K562 (cell line): ENCODE measurements at regions of chr2 and their contacts with region 1.

Region 1: GRCh38 chr2:112941753-112942658 is 31.0 kb downstream of the IL37 start:
- DNase-seq: peak; percentile 60 to 88 (median 68)
- ATAC-seq: peak; percentile 99
- H3K4me3 ChIP-seq: no peak overlapping the region
- H3K27ac ChIP-seq: no peak overlapping the region
- H3K4me1 ChIP-seq: peaks cover 0 to 3% of the 10 kb centered on the region in 2 experiments; a peak in 2 of 5 replicates
- H3K27me3 ChIP-seq: peaks cover 0 to 6% of the 10 kb centered on the region in 2 experiments; a peak in 1 of 5 replicates
- CTCF ChIP-seq: peak; percentile 87 to 94 (median 92)
- EP300 ChIP-seq: no peak
- POLR2A ChIP-seq: no peak
- RAD21 ChIP-seq: peak; percentile 82 to 91

Region 2: DNA sequence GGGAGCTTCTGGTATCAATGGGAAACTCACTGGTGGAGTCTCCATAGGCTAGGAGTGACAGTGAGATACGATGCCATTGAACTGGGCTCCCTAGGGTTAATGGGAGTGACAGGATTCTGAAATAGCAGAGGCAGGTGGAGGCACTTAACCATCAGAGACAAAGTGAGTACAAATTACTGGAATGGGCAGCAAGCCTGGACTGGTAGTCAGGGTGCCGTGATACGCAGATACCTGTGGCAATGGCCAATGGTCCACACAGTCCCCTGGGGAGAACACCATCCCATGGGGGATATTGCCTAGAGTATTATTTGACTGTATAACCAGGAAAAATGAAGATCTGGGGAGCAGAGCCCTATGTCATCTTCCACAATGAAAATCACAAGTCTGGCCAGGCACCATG is 340.3 kb before region 1 on chr2:
- CTCF ChIA-PET with region 1: interaction called, 4 read pairs
- POLR2A ChIA-PET with region 1: no interaction called
- in situ Hi-C with region 1: no loop called
- intact Hi-C with region 1: loop called (anchors 5 kb)
- DNase-seq: no peak
- ATAC-seq: no peak
- H3K4me3 ChIP-seq: no peak overlapping the region
- H3K27ac ChIP-seq: no peak overlapping the region
- H3K4me1 ChIP-seq: peaks cover 0 to 3% of the 10 kb centered on the region in 2 experiments; a peak in 2 of 5 replicates
- H3K27me3 ChIP-seq: no peaks in the 10 kb centered on the region
- CTCF ChIP-seq: no peak
- EP300 ChIP-seq: no peak
- POLR2A ChIP-seq: no peak
- RAD21 ChIP-seq: no peak

Region 3: GRCh38 chr2:112626604-112627059 is 315.4 kb before region 1 on chr2:
- CTCF ChIA-PET with region 1: interaction called, 4 read pairs
- POLR2A ChIA-PET with region 1: no interaction called
- in situ Hi-C with region 1: no loop called
- intact Hi-C with region 1: loop called (anchors 5 kb)
- DNase-seq: peak; percentile 52 to 78 (median 64)
- ATAC-seq: peak; percentile 88
- H3K4me3 ChIP-seq: no peak overlapping the region
- H3K27ac ChIP-seq: no peak overlapping the region
- H3K4me1 ChIP-seq: peaks cover 18 to 52% of the 10 kb centered on the region in 2 experiments
- H3K27me3 ChIP-seq: no peaks in the 10 kb centered on the region
- CTCF ChIP-seq: peak; percentile 90 to 91 (median 91)
- EP300 ChIP-seq: no peak
- POLR2A ChIP-seq: no peak
- RAD21 ChIP-seq: peak; percentile 97 to 99

Region 4: DNA sequence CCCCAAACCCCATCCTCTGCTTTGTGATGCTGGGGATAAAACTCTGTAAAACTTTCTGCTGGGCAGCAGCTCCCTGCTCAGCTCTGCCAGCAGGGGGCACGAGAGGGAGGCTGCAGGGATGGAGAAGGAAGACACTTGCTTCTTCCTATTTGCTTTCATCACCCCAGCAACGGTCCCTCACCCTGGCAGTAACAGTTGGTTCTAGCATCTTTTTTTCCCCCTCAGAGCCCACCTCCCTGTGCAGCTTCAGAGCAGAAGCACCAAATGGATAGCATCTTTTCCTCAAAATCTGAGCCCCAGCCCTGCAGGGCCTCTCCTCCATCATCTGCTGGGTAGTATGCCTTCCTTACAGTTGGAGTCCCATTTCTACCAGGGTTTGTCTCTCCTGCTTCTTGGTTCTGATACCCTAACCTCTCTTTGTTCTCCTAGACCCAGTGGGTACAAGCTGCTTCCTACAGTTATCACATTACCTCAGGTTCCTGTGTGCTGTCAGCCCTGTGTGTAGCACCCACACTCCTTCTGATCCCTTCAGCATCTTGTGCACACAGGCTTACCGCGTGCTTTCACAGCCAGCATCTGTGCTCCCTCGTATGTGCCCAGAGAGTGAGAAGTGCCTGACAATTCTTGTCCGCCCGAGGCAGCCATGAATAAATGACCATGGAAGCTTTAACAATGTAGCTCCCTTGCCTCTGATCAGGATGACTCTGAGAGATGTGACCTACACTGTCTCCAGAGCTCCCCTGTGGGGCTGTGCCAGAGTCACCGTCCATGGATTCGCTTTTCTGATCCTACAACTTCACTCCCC is 192.0 kb before region 1 on chr2:
- CTCF ChIA-PET with region 1: interaction called, 12 read pairs
- POLR2A ChIA-PET with region 1: interaction called, 11 read pairs
- in situ Hi-C with region 1: no loop called
- intact Hi-C with region 1: loop called (anchors 1 kb)
- DNase-seq: peak; percentile 63 to 82 (median 74)
- ATAC-seq: peak; percentile 93
- H3K4me3 ChIP-seq: no peak overlapping the region
- H3K27ac ChIP-seq: no peak overlapping the region
- H3K4me1 ChIP-seq: no peaks in the 10 kb centered on the region; a peak in 1 of 5 replicates
- H3K27me3 ChIP-seq: no peaks in the 10 kb centered on the region
- CTCF ChIP-seq: peak; percentile 92 to 93 (median 93)
- EP300 ChIP-seq: 0 out of 2 replicates have a peak, but pooled peaks have one; percentile 2
- POLR2A ChIP-seq: no peak
- RAD21 ChIP-seq: peak; percentile 96

Region 5: DNA sequence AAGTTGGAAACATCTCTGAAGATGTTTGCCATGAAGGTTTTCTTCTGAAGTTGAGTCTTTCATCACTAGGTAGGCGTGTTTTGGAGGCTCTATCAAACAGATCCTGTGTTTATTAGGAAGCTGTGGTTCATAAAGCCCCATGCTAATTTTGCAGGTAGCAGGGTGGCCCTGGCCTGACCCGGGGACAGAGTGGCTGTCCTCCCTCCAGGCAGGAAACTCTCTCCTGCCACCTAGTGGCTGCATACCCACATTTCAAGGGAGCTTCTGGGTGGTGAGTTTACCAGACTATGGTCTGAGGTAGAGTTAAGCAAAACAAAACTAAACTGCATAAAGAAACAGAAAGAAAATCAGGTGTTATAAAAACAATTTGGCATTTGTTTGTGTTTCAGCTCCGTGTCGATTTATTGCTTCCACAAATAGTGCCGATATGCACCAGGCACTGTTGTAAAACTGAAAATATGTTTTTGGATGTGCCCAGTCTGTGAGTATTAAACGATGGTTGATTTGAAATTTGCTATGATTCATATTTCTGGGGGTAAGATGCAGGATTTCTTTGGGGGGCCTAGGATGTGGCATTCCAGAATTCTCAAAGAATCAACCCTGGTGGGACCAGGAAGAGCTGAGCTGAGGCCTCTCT is 57.0 kb before region 1 on chr2:
- CTCF ChIA-PET with region 1: no interaction called
- POLR2A ChIA-PET with region 1: no interaction called
- in situ Hi-C with region 1: no loop called
- intact Hi-C with region 1: loop called (anchors 5 kb)
- DNase-seq: peak; percentile 78 to 92 (median 89)
- ATAC-seq: peak; percentile 97
- H3K4me3 ChIP-seq: no peak overlapping the region
- H3K27ac ChIP-seq: no peak overlapping the region
- H3K4me1 ChIP-seq: peaks cover 0 to 12% of the 10 kb centered on the region in 2 experiments; a peak in 3 of 5 replicates
- H3K27me3 ChIP-seq: no peaks in the 10 kb centered on the region
- CTCF ChIP-seq: peak; percentile 81 to 93 (median 92)
- EP300 ChIP-seq: no peak
- POLR2A ChIP-seq: no peak
- RAD21 ChIP-seq: peak; percentile 97

Region 6: GRCh38 chr2:112904883-112905282 is 37.1 kb before region 1 on chr2:
- CTCF ChIA-PET with region 1: no interaction called
- POLR2A ChIA-PET with region 1: no interaction called
- in situ Hi-C with region 1: no loop called
- intact Hi-C with region 1: loop called (anchors 5 kb)
- DNase-seq: peak; percentile 38 to 75 (median 46)
- ATAC-seq: peak; percentile 68
- H3K4me3 ChIP-seq: no peak overlapping the region
- H3K27ac ChIP-seq: no peak overlapping the region
- H3K4me1 ChIP-seq: peaks cover 4 to 9% of the 10 kb centered on the region in 2 experiments; a peak in 3 of 5 replicates
- H3K27me3 ChIP-seq: no peaks in the 10 kb centered on the region
- CTCF ChIP-seq: no peak
- EP300 ChIP-seq: peak; percentile 71; the same call in 1 of the 2 replicates
- POLR2A ChIP-seq: no peak
- RAD21 ChIP-seq: no peak

Region 7: DNA sequence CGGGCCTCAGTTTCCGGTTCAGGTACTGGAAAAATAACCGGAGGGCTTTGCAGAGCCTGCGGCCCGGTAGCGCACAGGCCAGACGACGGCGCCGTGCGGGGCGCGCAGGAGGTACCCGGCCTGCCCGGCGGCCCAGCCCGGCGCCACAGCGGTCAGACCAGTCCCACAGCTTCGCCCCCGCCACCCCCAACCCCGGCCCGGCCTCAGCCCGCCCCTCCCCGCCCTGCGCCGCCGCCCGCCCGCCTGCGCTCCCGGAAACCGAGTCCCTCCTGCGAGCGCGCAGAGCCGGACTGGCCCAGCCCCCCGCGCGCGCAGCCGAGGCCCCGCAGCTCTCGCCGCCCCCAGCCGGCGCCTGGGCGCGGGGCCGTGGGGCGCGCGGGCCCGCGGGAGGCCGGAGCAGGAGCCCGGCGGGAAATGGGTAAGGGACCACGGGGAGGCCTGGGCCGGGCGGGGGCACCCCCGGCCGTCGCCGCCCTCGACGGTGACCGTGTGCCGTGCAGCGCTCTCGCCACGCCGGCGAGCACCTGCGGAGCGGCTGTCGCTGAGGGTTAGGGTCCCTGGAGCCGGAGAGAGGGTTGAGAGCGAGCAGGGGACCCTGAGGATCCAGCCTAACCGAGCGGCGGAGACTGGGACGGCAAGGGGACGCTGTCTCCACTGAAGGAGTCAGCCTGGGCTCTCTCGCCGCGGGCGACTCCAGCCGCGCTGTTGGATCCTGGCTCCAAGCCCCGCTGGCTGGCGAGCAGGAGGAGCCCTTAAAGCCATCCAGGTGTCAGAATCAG is 215.3 kb after region 1 on chr2:
- CTCF ChIA-PET with region 1: no interaction called
- POLR2A ChIA-PET with region 1: no interaction called
- in situ Hi-C with region 1: no loop called
- intact Hi-C with region 1: no loop called
- DNase-seq: peak; percentile 58 to 72 (median 69)
- ATAC-seq: peak; percentile 84
- H3K4me3 ChIP-seq: peak overlapping the region; percentile 42
- H3K27ac ChIP-seq: no peak overlapping the region
- H3K4me1 ChIP-seq: peaks cover 0 to 10% of the 10 kb centered on the region in 2 experiments; a peak in 3 of 5 replicates
- H3K27me3 ChIP-seq: peaks cover 0 to 8% of the 10 kb centered on the region in 2 experiments; a peak in 4 of 5 replicates
- CTCF ChIP-seq: no peak
- EP300 ChIP-seq: no peak
- POLR2A ChIP-seq: no peak
- RAD21 ChIP-seq: no peak